Activated CD4-positive, alpha-beta T cell treated with anti-CD3 and anti-CD28 coated beads for 36 hours (primary cell): ENCODE measurements at regions of chr15 and their contacts with region 1.

Region 1: GRCh38 chr15:78437762-78438302 is at the start of gene IREB2:
- DNase-seq: peak; percentile 99
- ATAC-seq: peak; percentile 88
- H3K4me3 Mint-ChIP-seq: peak within 1 kb of the TSS; percentile 87
- H3K27ac Mint-ChIP-seq: peak within 1 kb of the TSS; percentile 99
- H3K4me1 Mint-ChIP-seq: peaks cover 35% of the 10 kb centered on the region
- H3K27me3 Mint-ChIP-seq: no peaks in the 10 kb centered on the region
- total RNA-seq, gene IREB2: 50.8 to 66.5 TPM

Region 2: DNA sequence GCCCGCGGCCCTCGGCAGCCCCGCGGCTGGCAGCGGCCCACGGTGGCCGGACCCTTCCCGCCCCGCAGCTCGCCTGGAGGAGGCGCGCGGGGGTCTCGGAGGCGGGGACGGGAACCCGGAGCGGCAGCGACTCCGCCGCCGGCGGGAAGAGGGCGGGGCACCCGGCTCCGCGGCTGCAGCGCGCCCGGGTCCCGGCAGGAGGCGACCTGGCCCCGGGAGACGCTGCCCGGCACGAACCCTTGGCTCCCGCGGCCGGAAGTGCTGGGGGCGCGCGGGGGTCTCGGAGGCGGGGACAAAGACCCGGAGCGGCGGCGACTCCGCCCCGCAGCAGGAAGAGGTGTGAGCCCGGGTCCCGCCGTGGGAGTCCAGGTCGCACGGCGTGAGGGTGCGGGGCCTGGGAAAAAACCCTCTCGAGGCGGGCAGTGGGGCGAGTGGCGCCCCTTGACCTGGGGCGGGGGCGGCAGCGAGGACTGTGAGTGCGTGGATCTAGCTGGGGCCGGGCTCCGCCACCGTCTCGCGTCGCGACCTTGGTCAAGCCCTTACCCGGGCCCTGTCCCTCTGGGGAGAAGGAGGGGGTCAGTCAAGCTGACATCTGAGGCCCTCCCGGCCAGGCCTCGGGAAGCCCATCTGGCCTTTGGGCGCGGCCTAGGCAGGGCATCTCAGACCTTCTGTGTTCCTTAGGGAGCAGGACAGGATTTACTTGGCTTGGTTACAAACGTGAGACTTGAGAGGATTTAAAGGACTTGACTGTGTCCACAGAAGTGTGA is 306.4 kb before region 1 on chr15 and contains the start of gene CIB2:
- CTCF ChIA-PET with region 1: no interaction called
- POLR2A ChIA-PET with region 1: no interaction called
- intact Hi-C with region 1: loop called in 1 of 2 experiments (anchors 1 kb)
- DNase-seq: peak; percentile 86
- ATAC-seq: peak; percentile 87
- H3K4me3 Mint-ChIP-seq: peak within 1 kb of the TSS; percentile 82
- H3K27ac Mint-ChIP-seq: peak within 1 kb of the TSS; percentile 88
- H3K4me1 Mint-ChIP-seq: peaks cover 20% of the 10 kb centered on the region
- H3K27me3 Mint-ChIP-seq: no peaks in the 10 kb centered on the region
- total RNA-seq, gene CIB2: 0.91 to 1.2 TPM

Region 3: GRCh38 chr15:78216708-78217107 is 221.1 kb before region 1 on chr15:
- CTCF ChIA-PET with region 1: no interaction called
- POLR2A ChIA-PET with region 1: no interaction called
- intact Hi-C with region 1: no loop called
- DNase-seq: no peak
- ATAC-seq: no peak
- H3K4me3 Mint-ChIP-seq: no peak overlapping the region
- H3K27ac Mint-ChIP-seq: no peak overlapping the region
- H3K4me1 Mint-ChIP-seq: no peaks in the 10 kb centered on the region
- H3K27me3 Mint-ChIP-seq: peaks cover 2% of the 10 kb centered on the region

Region 4: DNA sequence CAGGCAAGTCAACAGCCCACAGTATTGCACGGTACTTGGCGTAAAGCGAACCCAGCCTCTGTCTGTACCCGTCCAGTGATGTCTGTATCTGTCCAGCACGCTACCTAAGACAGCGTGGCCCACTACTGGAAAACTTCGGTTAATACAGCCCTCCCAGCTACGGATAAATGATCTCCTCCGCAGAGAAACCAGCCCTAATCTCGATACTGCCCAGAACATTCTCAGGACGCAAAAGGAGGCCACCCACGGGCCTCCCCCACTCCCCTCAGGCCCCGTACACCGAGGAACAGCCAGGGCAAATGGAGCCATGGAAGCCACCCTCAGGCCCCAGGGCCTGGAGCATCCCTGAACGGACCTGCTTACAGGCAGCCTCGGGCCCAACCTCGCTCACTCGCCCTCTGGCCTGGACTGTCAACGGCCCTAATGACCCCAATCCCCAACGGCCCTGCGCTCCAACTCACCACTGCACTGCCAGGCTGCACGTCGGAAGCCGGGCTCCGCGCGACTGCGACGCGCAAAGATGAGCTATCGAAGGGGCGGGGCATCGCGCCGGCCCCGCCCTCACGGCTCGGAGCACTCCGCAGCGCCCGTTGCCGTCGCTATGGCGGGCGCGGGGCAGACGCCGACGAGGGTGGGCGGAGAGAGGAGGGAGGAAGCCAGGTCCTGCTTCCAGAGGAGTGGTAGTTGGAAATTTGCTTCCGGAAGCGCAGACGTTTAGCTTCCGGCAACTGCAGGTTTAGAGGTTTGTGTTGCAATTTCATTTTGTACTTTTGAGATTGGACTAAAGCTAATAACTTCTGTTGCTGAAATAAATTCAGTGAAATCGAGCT is 138.5 kb before region 1 on chr15 and contains the start of gene SKIC8:
- CTCF ChIA-PET with region 1: interaction called, 3 read pairs
- POLR2A ChIA-PET with region 1: no interaction called
- intact Hi-C with region 1: loop called (anchors 1 to 5 kb)
- DNase-seq: peak; percentile 95
- ATAC-seq: peak; percentile 96
- H3K4me3 Mint-ChIP-seq: peak within 1 kb of the TSS; percentile 96
- H3K27ac Mint-ChIP-seq: peak within 1 kb of the TSS; percentile 91
- H3K4me1 Mint-ChIP-seq: peaks cover 29% of the 10 kb centered on the region
- H3K27me3 Mint-ChIP-seq: no peaks in the 10 kb centered on the region
- total RNA-seq, gene SKIC8: 39.2 to 52.6 TPM

Region 5: DNA sequence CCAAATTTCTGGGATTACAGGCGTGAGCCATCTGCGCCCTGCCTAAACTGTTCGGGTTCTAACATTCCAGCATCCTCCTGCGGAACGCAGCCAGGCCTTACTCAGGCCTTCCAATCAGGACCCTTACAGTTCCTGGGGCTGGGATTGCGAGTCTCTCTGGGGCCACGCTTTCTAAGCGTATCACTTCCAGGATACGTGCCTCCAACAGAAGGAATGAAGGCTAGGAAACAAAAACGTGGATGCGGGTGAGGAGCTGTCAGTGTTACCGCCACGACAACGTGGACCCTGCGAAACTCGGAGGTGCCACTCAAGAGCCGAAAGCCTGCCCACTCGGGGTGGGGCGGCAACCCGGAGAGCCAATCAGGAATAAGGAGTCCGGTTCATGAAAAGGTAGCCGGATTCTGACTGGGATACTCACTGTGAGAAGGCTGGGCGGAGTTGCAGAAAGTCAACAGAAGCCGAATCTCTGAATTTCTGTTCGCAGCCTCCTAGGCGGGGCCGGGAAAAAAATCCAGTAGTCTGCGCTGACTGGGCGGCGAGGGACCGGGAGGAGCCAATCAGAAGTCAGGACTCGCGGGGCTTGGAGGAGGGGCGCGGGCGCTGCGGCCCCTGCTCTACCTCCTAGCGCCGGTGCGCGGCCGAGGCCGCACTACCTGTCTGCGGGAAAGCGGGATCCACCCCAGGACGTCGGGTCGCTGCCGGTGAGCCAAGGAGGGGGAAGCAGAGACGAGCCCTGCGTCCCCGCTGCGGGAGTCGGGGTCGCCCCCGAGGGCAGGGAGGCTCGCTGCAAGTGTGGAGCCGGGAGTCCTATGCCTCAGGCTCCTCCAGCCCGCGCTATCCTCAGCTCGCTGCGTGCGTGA is 69.4 kb after region 1 on chr15 and contains the start of gene HYKK:
- CTCF ChIA-PET with region 1: no interaction called
- POLR2A ChIA-PET with region 1: interaction called, 3 read pairs
- intact Hi-C with region 1: loop called in 1 of 2 experiments (anchors 1 kb)
- DNase-seq: peak; percentile 87
- ATAC-seq: peak; percentile 91
- H3K4me3 Mint-ChIP-seq: peak within 1 kb of the TSS; percentile 77
- H3K27ac Mint-ChIP-seq: peak within 1 kb of the TSS; percentile 58
- H3K4me1 Mint-ChIP-seq: peaks cover 22% of the 10 kb centered on the region
- H3K27me3 Mint-ChIP-seq: no peaks in the 10 kb centered on the region
- total RNA-seq, gene HYKK: 2.5 to 4.2 TPM

Region 6: GRCh38 chr15:78761891-78762385 is 324.1 kb after region 1 on chr15:
- CTCF ChIA-PET with region 1: no interaction called
- POLR2A ChIA-PET with region 1: no interaction called
- intact Hi-C with region 1: loop called in 1 of 2 experiments (anchors 5 kb)
- DNase-seq: no peak
- ATAC-seq: peak; percentile 7
- H3K4me3 Mint-ChIP-seq: no peak overlapping the region
- H3K27ac Mint-ChIP-seq: peak overlapping the region; percentile 86
- H3K4me1 Mint-ChIP-seq: peaks cover 25% of the 10 kb centered on the region
- H3K27me3 Mint-ChIP-seq: no peaks in the 10 kb centered on the region